Gastrocnemius medialis (tissue), 4 donors: ENCODE measurements at regions of chr4 and their contacts with region 1.

Region 1: DNA sequence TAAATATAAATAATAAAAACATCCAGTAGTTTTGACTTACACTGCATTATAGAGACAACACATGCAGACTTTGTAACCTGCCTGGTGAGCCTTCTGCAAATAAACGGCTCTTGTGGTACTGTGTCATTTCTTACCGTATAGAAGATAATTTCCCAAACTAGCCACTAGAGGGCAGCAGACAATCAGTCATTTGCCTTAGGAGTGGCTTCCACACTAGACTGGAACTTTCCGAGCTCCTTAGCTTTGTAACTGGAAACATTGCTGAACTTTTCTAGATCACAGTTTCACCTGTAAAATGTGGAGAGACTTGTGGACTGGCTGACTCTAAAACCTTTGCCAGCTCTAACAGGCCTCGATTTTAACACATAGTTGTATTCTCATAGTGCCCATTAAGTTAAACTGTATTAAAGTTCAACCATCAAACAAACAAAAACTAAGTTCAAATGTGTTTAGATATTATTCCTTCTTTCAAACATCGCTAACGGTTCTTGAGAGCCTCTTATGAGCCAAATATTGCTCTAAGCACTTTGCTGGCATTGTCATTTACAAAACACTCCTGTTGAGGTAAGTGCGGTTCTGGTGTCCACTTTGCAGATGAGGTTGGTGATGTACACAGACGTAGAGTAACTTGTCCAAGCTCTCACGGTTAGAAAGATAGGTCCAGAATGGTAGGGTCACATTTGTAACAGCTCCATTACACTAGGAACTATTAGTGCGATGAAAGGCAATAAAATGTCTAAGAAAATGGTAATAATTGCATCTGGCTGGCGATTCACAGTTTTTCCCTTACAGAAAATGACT is 345.5 kb downstream of the ANK2 start:
- DNase-seq: peak; percentile 19 to 52
- ATAC-seq: peak; percentile 97 to 99
- H3K4me3 ChIP-seq: no peak overlapping the region
- H3K27ac ChIP-seq: no peak overlapping the region
- H3K4me1 ChIP-seq: peaks cover 0 to 7% of the 10 kb centered on the region in 2 donors
- H3K27me3 ChIP-seq: no peaks in the 10 kb centered on the region
- CTCF ChIP-seq: peak; percentile 82 to 93 (median 88)
- POLR2A ChIP-seq: no peak

Region 2: GRCh38 chr4:113547487-113548042 is 152.6 kb after region 1 on chr4:
- in situ Hi-C with region 1: loop called in 2 of 4 experiments (anchors 10 kb)
- intact Hi-C with region 1: loop called (anchors 2 kb)
- DNase-seq: peak; percentile 81 to 91
- ATAC-seq: peak; percentile 96 to 99
- H3K4me3 ChIP-seq: no peak overlapping the region
- H3K27ac ChIP-seq: peak overlapping the region; percentile 69 to 81 (median 78)
- H3K4me1 ChIP-seq: peaks cover 16 to 22% of the 10 kb centered on the region in 2 donors
- H3K27me3 ChIP-seq: no peaks in the 10 kb centered on the region
- CTCF ChIP-seq: peak; percentile 95 to 98 (median 96)
- POLR2A ChIP-seq: peak in 1 of 2 donors; percentile 13

Region 3: DNA sequence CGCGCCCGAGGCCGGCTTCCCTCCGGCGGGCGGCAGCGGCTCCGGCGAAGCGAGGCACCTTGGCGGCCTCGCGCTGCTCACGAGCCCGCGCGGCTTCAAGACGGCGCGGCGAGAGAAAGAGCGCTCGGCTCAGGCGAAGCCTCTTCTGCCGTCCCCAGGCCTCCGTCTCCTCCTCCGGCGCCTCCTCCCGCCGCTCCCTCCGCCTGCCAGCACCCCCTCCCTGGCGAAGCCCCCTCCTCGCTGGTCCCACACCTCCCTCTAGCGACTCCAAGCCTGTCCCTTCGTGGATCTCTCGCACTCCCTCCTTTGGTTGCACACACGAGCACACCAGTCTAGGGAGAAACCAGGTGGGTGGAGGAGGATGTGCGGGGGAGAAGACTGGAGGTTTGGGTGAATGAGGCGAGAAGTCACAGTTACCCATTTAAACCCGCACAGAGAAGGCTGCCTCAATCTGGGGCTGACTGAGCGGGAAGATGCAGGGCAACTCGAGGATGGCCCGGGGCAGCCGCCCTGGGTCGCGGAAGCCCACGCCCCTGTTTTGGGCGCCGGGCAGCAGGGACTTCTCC is 366.8 kb after region 1 on chr4 and contains the start of gene CAMK2D:
- in situ Hi-C with region 1: loop called in 2 of 4 experiments (anchors 10 kb)
- intact Hi-C with region 1: loop called (anchors 1 kb)
- DNase-seq: peak; percentile 91 to 94
- ATAC-seq: peak; percentile 74 to 75
- H3K4me3 ChIP-seq: peak within 1 kb of the TSS; percentile 76 to 90 (median 86)
- H3K27ac ChIP-seq: peak within 1 kb of the TSS; percentile 93 to 99 (median 98)
- H3K4me1 ChIP-seq: peaks cover 29 to 31% of the 10 kb centered on the region in 2 donors
- H3K27me3 ChIP-seq: no peaks in the 10 kb centered on the region
- CTCF ChIP-seq: peak; percentile 38 to 81 (median 60)
- POLR2A ChIP-seq: peak; percentile 60 to 77
- total RNA-seq, gene CAMK2D: 73.2 to 149 (median 119) TPM

Region 4: GRCh38 chr4:113901994-113902787 is 507.3 kb after region 1 on chr4:
- in situ Hi-C with region 1: loop called in 2 of 4 experiments (anchors 25 kb)
- intact Hi-C with region 1: loop called (anchors 5 kb)
- DNase-seq: no peak
- ATAC-seq: no peak
- H3K4me3 ChIP-seq: no peak overlapping the region
- H3K27ac ChIP-seq: no peak overlapping the region
- H3K4me1 ChIP-seq: no peaks in the 10 kb centered on the region
- H3K27me3 ChIP-seq: no peaks in the 10 kb centered on the region
- CTCF ChIP-seq: no peak
- POLR2A ChIP-seq: no peak

Region 5: GRCh38 chr4:114052227-114052626 is 657.3 kb after region 1 on chr4:
- in situ Hi-C with region 1: loop called (anchors 25 kb)
- intact Hi-C with region 1: no loop called
- DNase-seq: no peak
- ATAC-seq: no peak
- H3K4me3 ChIP-seq: no peak overlapping the region
- H3K27ac ChIP-seq: no peak overlapping the region
- H3K4me1 ChIP-seq: no peaks in the 10 kb centered on the region
- H3K27me3 ChIP-seq: no peaks in the 10 kb centered on the region
- CTCF ChIP-seq: no peak
- POLR2A ChIP-seq: no peak